ENCODE measurements at regions of chr1 and their contacts with region 1.

Region 1: DNA sequence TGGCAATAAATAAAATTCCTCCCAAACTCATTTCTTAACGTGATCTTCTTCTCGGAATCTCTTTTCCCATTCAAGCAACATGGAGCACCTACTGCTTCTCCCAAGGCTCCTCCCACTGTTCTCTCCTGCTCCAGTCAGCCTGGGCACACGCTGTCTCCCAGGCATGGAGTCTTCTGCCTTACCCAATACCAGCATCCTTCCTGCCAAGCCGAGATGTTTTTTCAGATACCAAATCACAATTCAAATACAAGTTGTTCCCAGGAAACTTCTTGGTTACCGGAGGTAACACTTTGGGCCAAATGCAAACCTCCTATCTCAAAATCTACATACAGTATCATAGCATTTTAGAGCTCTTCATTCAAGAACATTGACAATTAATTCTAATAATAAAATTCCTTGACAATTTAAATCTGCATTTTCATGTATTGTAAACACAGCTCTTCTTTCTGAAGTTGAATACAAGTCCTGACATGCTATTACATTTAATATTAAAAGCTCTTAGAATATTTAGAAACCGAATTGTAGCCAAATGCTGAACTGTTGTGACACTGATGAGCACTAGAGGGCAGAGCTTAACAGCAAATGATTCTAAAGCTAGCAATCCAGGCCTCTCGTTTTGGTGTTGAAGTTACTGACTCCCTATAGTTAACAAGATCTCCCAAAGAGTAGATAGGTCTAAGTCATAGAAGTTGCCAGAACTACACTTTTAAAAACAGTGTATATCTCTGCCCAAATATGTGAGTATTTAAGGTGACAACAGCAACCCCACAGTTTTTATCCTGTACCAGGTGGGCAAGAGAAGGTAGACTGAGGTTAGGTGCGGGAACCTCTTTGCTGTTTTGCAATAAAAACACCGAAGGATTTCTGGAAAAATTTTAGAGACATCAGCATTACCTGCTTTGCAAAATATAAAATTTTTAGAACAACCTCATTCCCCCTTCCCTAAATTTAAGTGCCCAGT is 52.3 kb downstream of the BCAR3 start:
- DNase-seq: no peak
- H3K4me3 ChIP-seq: no peak overlapping the region
- CTCF ChIP-seq: peak; percentile 70

Region 2: GRCh38 chr1:93559045-93559444 is 70.3 kb before region 1 on chr1:
- CTCF ChIA-PET with region 1: no interaction called
- POLR2A ChIA-PET with region 1: no interaction called
- DNase-seq: no peak
- H3K4me3 ChIP-seq: no peak overlapping the region
- CTCF ChIP-seq: no peak

Region 3: DNA sequence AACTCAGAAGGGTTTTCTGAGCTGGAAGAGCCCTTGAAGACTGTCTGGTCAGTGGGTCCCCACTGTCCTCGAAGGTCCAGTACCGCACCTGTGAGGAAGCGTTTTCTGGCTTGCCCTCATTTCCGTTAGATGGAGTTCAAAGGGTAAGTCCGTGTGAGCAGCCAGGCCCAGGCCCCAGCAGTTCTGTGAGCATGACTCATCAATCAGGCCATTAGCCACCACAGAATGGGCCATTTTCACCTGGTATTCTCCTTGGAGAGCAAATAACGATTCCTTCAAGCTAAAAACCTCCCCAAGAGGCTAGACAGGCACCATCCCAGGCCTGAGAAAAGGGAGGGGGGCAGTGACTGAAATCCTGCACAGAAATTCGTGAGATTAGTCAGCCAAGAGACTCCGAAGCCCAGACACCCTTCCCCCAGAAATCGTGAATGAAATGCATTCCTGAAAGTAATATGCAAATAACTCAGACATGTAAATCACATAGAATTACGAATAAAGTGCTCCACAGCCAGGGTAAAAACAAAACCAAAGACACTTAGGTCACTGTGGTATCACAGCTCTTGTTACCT is 13.7 kb before region 1 on chr1:
- CTCF ChIA-PET with region 1: interaction called, 20 read pairs
- POLR2A ChIA-PET with region 1: no interaction called
- DNase-seq: no peak
- H3K4me3 ChIP-seq: no peak overlapping the region
- CTCF ChIP-seq: no peak

Region 4: GRCh38 chr1:93652323-93652949 is 23.1 kb after region 1 on chr1:
- CTCF ChIA-PET with region 1: interaction called, 11 read pairs
- POLR2A ChIA-PET with region 1: no interaction called
- DNase-seq: no peak
- H3K4me3 ChIP-seq: no peak overlapping the region
- CTCF ChIP-seq: no peak

Region 5: GRCh38 chr1:93672069-93672468 is 42.7 kb after region 1 on chr1:
- CTCF ChIA-PET with region 1: interaction called, 10 read pairs
- POLR2A ChIA-PET with region 1: no interaction called
- DNase-seq: no peak
- H3K4me3 ChIP-seq: no peak overlapping the region
- CTCF ChIP-seq: no peak

Region 6: GRCh38 chr1:93680757-93681550 is 51.6 kb after region 1 on chr1:
- CTCF ChIA-PET with region 1: interaction called, 10 read pairs
- POLR2A ChIA-PET with region 1: interaction called, 3 read pairs
- DNase-seq: no peak
- H3K4me3 ChIP-seq: peak overlapping the region; percentile 75
- CTCF ChIP-seq: peak; percentile 83

Measured in AG04449 (cell line).